Activated CD4-positive, alpha-beta T cell treated with anti-CD3 and anti-CD28 coated beads for 36 hours (primary cell): ENCODE measurements at regions of chr11 and their contacts with region 1.

Region 1: DNA sequence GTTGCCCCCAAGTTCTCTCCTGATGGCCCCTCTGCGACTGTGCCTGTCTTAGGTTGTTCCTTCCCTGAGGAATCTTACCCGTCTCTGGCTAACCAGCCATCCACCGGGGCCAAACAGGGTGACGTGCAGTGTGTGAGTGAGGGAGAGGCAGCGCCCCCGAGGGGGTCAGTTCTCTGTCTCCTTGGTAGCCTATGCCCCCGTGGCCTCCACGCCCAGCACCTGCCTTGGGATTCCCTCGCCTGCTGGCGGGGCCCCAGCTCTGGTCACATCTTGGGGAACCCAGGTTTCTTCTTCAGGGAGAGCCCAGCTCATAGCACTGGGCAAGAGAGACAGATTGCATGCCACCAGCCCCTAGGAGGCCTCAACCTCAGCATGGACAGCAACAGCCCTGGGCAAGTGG is 5.8 kb downstream of the NXF1 start:
- DNase-seq: no peak
- ATAC-seq: no peak
- H3K4me3 Mint-ChIP-seq: no peak overlapping the region
- H3K27ac Mint-ChIP-seq: peak overlapping the region; percentile 5
- H3K4me1 Mint-ChIP-seq: peaks cover 24% of the 10 kb centered on the region
- H3K27me3 Mint-ChIP-seq: no peaks in the 10 kb centered on the region

Region 2: DNA sequence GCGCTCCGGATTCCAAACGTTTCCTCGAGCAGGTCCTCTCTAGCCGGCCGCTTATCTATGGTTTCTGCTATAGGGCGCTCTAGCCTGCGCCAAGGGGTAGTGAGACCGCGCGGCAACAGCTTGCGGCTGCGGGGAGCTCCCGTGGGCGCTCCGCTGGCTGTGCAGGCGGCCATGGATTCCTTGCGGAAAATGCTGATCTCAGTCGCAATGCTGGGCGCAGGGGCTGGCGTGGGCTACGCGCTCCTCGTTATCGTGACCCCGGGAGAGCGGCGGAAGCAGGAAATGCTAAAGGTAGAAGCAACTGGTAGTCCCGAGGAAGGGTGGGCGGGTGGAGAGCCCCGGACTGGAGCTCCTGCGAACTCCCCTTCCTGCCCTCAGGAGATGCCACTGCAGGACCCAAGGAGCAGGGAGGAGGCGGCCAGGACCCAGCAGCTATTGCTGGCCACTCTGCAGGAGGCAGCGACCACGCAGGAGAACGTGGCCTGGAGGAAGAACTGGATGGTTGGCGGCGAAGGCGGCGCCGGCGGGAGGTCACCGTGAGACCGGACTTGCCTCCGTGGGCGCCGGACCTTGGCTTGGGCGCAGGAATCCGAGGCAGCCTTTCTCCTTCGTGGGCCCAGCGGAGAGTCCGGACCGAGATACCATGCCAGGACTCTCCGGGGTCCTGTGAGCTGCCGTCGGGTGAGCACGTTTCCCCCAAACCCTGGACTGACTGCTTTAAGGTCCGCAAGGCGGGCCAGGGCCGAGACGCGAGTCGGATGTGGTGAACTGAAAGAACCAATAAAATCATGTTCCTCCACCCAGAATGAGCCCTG is 127.7 kb before region 1 on chr11 and contains the starts of genes LBHD1 and UQCC3:
- CTCF ChIA-PET with region 1: no interaction called
- POLR2A ChIA-PET with region 1: interaction called, 10 read pairs
- intact Hi-C with region 1: no loop called
- DNase-seq: peak; percentile 86
- ATAC-seq: peak; percentile 88
- H3K4me3 Mint-ChIP-seq: peak within 1 kb of the TSS; percentile 91
- H3K27ac Mint-ChIP-seq: peak within 1 kb of the TSS; percentile 96
- H3K4me1 Mint-ChIP-seq: peaks cover 54% of the 10 kb centered on the region
- H3K27me3 Mint-ChIP-seq: no peaks in the 10 kb centered on the region
- total RNA-seq, gene LBHD1: 11.9 to 15.5 TPM
- total RNA-seq, gene UQCC3: 4.1 to 6.4 TPM

Region 3: DNA sequence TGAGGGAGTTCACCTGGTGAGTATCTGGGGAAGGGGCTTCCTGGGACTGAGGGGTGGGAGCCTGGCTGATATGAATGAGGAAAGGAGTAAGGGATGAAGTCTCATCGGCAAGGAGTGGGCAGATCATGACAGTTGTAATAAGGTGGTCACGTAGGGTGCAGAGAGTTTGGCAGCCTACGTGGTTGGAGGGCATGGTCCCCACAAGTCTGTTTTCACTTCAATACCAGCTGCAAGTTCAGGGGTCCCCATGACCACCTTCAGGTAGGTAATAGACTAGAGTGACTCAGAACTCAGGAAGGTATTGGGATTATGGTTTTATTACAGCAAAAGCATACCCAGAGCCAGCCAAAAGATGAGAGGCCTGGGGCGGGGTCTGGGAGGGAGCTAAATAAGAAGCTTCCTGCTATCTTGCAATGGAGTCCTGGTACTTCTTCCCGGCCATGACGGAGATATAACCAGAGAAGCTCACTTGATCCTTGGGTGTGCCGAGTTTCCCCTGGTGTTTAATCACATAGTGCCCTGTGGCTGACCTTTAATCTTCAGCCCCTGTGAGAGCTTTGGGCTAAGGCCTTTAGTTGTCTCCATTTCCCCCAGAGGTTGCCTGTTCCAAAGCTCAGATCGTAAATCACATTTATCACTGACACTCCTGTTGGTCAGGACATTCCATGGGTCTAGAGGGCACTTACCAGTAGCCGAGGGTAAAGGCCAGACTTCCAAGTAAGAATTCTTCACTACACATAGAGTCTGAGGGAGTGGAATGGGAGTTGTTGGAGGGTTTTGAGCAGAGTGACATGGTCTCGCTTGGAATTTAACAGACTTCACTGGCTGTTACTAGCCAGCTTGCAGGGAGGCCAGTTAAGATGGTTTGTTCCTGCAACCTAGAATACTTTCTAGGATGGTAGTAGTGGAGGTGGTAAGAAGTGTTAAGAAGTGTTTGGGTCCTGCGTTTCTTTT is 90.3 kb after region 1 on chr11:
- CTCF ChIA-PET with region 1: no interaction called
- POLR2A ChIA-PET with region 1: interaction called, 11 read pairs
- intact Hi-C with region 1: no loop called
- DNase-seq: no peak
- ATAC-seq: peak; percentile 11
- H3K4me3 Mint-ChIP-seq: no peak overlapping the region
- H3K27ac Mint-ChIP-seq: peak overlapping the region; percentile 29
- H3K4me1 Mint-ChIP-seq: peaks cover 25% of the 10 kb centered on the region
- H3K27me3 Mint-ChIP-seq: no peaks in the 10 kb centered on the region